Panc1 (cell line): ENCODE measurements at regions of chr6 and their contacts with region 1.

Region 1: GRCh38 chr6:138477913-138478539 is 21.3 kb downstream of the NHSL1 start:
- DNase-seq: no peak
- ATAC-seq: no peak
- H3K4me3 ChIP-seq: no peak overlapping the region
- H3K27ac ChIP-seq: no peak overlapping the region
- H3K4me1 ChIP-seq: no peaks in the 10 kb centered on the region
- H3K27me3 ChIP-seq: no peaks in the 10 kb centered on the region
- CTCF ChIP-seq: no peak

Region 2: GRCh38 chr6:138073264-138073663 is 404.8 kb before region 1 on chr6:
- CTCF ChIA-PET with region 1: interaction called, 17 read pairs
- POLR2A ChIA-PET with region 1: no interaction called
- in situ Hi-C with region 1: no loop called
- intact Hi-C with region 1: no loop called
- DNase-seq: no peak
- ATAC-seq: no peak
- H3K4me3 ChIP-seq: no peak overlapping the region
- H3K27ac ChIP-seq: no peak overlapping the region
- H3K4me1 ChIP-seq: no peaks in the 10 kb centered on the region
- H3K27me3 ChIP-seq: no peaks in the 10 kb centered on the region
- CTCF ChIP-seq: no peak

Region 3: DNA sequence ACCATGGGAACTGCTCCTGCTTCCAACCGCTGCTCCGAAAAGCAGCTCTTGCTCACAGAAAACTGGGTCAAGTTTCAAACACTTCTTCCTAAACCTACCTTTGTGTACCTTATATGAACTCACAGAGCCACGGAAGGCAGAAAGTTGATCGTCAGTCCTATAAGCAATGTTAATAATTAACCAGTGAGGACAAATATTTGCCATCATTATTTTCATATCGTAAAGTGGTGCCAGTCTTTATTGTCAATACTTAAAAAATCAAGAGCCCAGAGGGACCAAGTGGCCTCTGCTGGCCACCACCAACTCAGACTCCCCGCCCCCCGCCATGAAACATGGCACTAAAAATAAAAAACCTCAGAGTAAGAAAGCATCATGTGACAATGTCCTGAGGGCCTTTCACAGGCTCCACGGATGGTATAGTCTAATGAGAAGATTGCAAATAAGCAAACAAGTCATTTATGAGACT is 250.7 kb before region 1 on chr6:
- CTCF ChIA-PET with region 1: no interaction called
- POLR2A ChIA-PET with region 1: no interaction called
- in situ Hi-C with region 1: no loop called
- intact Hi-C with region 1: no loop called
- DNase-seq: no peak
- ATAC-seq: no peak
- H3K4me3 ChIP-seq: no peak overlapping the region
- H3K27ac ChIP-seq: no peak overlapping the region
- H3K4me1 ChIP-seq: peaks cover 6% of the 10 kb centered on the region; the same call in 1 of the 2 replicates
- H3K27me3 ChIP-seq: no peaks in the 10 kb centered on the region
- CTCF ChIP-seq: no peak

Region 4: DNA sequence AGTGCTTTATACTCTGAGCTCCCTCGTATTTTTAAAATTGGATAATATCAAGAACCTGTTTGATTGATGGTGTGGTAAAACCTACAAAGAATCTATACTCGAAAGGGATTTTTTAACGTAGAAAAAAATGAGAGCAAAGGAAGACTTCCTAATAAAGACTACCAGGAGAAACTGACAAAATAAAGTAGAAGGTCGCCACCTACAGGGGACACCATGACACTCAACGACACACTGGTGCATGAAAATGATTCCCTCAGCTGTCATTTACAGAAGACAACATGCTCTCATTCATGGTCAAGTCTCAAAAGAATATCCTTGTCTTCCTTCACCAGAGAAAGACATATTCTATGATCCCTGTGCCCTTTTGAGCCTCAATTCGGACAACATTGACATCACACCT is 31.3 kb after region 1 on chr6:
- CTCF ChIA-PET with region 1: no interaction called
- POLR2A ChIA-PET with region 1: interaction called, 10 read pairs
- in situ Hi-C with region 1: no loop called
- intact Hi-C with region 1: no loop called
- DNase-seq: peak; percentile 27
- ATAC-seq: no peak
- H3K4me3 ChIP-seq: no peak overlapping the region
- H3K27ac ChIP-seq: no peak overlapping the region
- H3K4me1 ChIP-seq: no peaks in the 10 kb centered on the region
- H3K27me3 ChIP-seq: no peaks in the 10 kb centered on the region
- CTCF ChIP-seq: peak; percentile 61